CD4-positive, alpha-beta memory T cell (primary cell): ENCODE measurements at regions of chr16 and their contacts with region 1.

Region 1: GRCh38 chr16:46607529-46607928 is 13.7 kb downstream of the SHCBP1 start:
- DNase-seq: peak in 4 of 5 donors; percentile 27 to 44 (median 39)
- H3K4me3 ChIP-seq: no peak overlapping the region
- H3K4me3 Mint-ChIP-seq: no peak overlapping the region
- H3K27ac ChIP-seq: no peak overlapping the region
- H3K27ac Mint-ChIP-seq: no peak overlapping the region
- H3K4me1 ChIP-seq: peaks cover 10% of the 10 kb centered on the region
- H3K4me1 Mint-ChIP-seq: no peaks in the 10 kb centered on the region
- H3K27me3 ChIP-seq: no peaks in the 10 kb centered on the region
- H3K27me3 Mint-ChIP-seq: no peaks in the 10 kb centered on the region

Region 2: DNA sequence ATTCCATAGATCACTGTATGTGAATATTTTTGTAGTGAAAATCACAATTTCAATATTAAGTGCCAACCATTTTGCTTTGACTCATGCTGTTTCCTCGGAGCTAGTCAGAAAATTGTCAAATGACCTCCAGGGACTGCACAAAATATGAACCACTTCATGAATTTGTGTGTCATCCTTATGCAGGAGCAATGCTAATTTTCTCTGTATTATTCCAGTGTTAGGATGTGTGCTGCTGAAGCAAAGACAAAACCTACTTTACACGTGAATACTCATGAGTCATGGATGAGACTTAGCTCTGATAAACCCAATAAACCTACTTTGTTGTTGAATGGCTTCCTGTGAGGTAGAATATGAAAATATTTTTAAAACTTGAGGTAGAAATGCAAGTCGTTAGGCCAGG is 51.6 kb before region 1 on chr16:
- CTCF ChIA-PET with region 1: interaction called, 103 read pairs
- POLR2A ChIA-PET with region 1: no interaction called
- intact Hi-C with region 1: loop called (anchors 1 kb)
- DNase-seq: no peak
- H3K4me3 ChIP-seq: no peak overlapping the region
- H3K4me3 Mint-ChIP-seq: no peak overlapping the region
- H3K27ac ChIP-seq: no peak overlapping the region
- H3K27ac Mint-ChIP-seq: no peak overlapping the region
- H3K4me1 ChIP-seq: no peaks in the 10 kb centered on the region
- H3K4me1 Mint-ChIP-seq: peaks cover 0 to 2% (median under 1%) of the 10 kb centered on the region in 4 donors
- H3K27me3 ChIP-seq: no peaks in the 10 kb centered on the region
- H3K27me3 Mint-ChIP-seq: peaks cover 11% of the 10 kb centered on the region in 2 donors

Region 3: GRCh38 chr16:46591257-46591656 is 16.3 kb before region 1 on chr16:
- CTCF ChIA-PET with region 1: interaction called, 16 read pairs
- POLR2A ChIA-PET with region 1: no interaction called
- intact Hi-C with region 1: no loop called
- DNase-seq: no peak
- H3K4me3 ChIP-seq: no peak overlapping the region
- H3K4me3 Mint-ChIP-seq: no peak overlapping the region
- H3K27ac ChIP-seq: no peak overlapping the region
- H3K27ac Mint-ChIP-seq: no peak overlapping the region
- H3K4me1 ChIP-seq: no peaks in the 10 kb centered on the region
- H3K4me1 Mint-ChIP-seq: no peaks in the 10 kb centered on the region
- H3K27me3 ChIP-seq: no peaks in the 10 kb centered on the region
- H3K27me3 Mint-ChIP-seq: no peaks in the 10 kb centered on the region

Region 4: DNA sequence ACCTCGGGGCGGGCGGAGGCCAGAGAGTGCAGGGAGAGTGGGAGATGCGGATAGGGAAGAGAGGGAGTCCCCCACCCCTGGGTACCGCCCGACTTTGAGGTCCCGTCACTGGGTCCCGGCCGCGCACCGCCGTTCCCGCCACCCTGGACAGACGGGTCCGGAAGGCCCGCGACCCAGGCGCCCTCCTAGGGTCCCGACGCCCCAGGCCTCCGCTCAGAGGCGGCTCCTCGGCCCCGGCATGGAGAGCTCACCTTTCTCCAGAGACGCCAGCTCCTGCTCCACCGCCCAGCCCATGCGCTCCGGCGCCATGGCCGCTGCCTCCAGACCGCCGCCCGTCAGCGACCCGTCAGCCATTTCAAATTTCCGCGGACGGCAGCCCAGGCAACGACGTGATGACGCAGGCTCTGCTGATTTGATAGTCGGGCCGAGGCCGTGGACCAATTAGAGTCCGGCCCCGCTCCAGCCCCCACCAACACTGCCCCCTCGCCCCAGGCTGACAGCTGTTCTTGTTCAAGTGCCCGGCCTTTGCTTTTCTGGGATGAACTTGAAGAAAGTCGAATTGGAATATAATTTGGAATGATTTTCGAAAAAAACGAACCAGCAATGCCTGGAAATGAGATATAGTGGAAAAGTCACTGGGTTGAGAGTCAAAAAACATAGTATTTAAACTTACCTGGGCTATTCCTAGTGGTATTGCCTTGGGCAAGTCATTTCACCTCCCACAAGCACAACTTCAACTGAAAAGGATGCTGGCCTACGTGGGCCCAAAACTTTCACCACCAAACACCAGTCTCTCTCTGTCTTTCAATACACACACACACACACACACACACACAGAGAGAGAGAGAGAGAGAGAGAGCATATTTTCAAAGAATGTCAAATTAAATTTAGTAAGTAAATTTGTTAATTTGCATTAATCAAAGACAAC is 13.7 kb after region 1 on chr16 and contains the start of gene SHCBP1:
- CTCF ChIA-PET with region 1: interaction called, 19 read pairs
- POLR2A ChIA-PET with region 1: no interaction called
- intact Hi-C with region 1: no loop called
- DNase-seq: peak; percentile 60 to 68 (median 63)
- H3K4me3 ChIP-seq: peak within 1 kb of the TSS; percentile 53 to 73
- H3K4me3 Mint-ChIP-seq: peak within 1 kb of the TSS; percentile 89 to 94 (median 90)
- H3K27ac ChIP-seq: no peak within 1 kb of the TSS
- H3K27ac Mint-ChIP-seq: peak within 1 kb of the TSS; percentile 59 to 87 (median 77)
- H3K4me1 ChIP-seq: peaks cover 16% of the 10 kb centered on the region
- H3K4me1 Mint-ChIP-seq: peaks cover 17 to 21% (median 17%) of the 10 kb centered on the region in 4 donors
- H3K27me3 ChIP-seq: no peaks in the 10 kb centered on the region
- H3K27me3 Mint-ChIP-seq: no peaks in the 10 kb centered on the region
- total RNA-seq, gene SHCBP1: 0.36 to 0.55 TPM